Left colon (tissue), 2 donors: ENCODE measurements at regions of chr11 and their contacts with region 1.

Region 1: DNA sequence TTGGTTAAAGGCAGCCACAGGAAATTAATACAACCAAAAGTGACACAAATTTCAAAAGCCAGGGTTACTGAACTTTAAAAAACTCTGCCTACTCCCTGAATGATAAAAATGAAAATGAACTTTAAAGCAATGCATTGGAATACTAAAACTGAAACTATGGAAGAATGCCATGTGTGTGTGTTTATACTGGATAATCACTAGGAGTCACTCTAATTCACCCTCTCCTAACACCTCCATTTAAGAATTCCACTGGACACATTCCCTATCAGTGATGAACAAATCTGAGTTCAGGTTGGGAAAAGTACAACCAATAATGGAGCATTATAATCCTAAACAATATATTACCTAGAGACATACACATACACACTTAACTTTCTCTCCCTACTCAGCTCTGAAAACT is 27.5 kb upstream of the PLAAT3 start:
- DNase-seq: no peak
- ATAC-seq: peak; percentile 38

Region 2: GRCh38 chr11:62791501-62792201 is 850.1 kb before region 1 on chr11 and contains the start of gene TMEM223:
- intact Hi-C with region 1: no loop called
- DNase-seq: peak; percentile 85 to 92
- ATAC-seq: peak; percentile 78
- total RNA-seq, gene TMEM223: 18.5 to 22.6 TPM

Region 3: DNA sequence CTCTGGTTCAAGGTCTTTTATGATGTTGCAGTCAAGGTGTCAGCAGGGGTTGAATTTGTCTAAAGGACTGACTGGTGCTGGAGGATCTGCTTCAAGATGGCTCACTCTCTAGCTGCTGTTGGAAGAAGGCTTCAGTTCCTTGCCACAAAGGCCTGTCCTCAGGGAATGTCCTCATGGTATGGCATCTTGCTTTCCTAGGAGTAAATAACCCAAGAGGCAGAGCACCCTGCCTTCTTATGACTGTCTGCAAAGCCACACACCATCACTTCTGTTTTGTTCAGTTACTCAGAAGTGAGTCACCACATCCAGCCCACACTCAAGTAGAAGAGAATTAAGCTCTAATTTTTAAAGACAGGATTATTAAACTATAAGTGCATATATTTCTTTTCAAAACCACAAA is 196.0 kb before region 1 on chr11:
- intact Hi-C with region 1: no loop called
- DNase-seq: no peak
- ATAC-seq: no peak

Region 4: DNA sequence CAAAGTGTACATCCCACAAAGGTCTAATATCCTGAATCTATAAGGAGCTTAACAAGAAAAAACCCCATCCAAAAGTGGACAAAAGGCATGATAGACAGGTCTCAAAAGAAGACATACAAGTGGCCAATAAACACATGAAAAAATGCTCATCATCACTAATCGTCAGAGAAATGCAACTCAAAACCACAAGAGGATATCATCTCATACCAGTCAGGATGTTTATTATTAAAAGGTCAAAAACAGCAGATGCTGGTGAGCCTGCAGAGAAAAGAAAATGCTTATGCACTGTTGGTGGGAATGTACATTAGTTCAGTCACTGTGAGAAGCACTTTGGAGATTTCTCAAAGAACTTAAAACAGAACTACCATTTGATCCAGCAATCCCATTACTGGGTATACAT is 123.2 kb before region 1 on chr11:
- intact Hi-C with region 1: no loop called
- DNase-seq: no peak
- ATAC-seq: no peak

Region 5: DNA sequence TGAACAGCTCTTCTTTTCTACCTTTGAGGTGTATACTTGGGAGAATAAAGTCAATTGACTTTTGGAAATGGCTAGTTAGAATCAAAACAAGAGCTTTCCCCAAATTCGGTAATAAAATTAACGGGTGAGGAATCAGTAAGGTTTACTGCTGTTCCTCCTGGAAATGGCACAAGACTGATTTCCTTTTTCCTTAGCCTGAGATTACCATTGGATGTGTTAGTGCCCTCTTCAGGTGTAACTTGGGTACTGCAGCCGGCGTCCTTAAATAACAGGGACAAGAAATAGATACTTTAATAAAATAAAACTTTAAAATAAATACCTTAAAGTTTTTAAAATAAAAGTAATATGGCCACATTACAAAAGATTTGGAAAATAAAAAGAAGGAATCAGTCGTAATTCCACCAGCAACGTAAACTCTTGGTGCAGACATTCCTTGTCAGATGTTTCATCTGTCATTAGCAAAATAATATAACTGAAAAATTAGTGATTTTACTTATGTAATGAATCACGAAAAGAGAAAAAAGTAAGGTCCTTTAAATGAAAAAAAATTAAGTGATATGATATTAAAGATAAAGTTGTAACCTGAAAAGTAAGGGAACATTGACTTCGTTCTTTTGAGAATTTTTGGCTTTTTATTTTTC is 97.1 kb after region 1 on chr11:
- intact Hi-C with region 1: loop called in 1 of 2 experiments (anchors 10 kb)
- DNase-seq: peak; percentile 39 to 84
- ATAC-seq: peak; percentile 61

Region 6: GRCh38 chr11:63901660-63902059 is 259.9 kb after region 1 on chr11:
- intact Hi-C with region 1: no loop called
- DNase-seq: no peak
- ATAC-seq: peak; percentile 44